ENCODE measurements at regions of chr5 and their contacts with region 1.

Region 1: DNA sequence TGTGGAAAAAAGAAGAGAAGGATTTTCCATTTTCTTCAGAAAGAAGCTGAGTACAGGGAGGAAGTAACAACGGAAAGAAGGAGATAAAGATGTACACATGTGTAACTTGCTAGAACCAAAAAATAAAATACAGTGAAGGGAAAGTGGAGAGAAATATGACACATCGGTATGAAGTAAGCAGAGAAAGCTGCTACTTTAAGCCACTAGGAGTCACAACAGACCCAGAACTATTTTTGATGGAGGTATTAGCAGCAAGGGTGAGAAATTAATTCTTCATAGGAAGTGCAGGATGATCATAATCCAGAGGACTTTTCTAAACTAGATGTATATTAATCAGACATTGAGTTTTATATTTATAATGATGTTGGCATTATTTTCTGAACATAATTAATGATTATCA is 88.5 kb downstream of the FAM174A start:
- DNase-seq: no peak
- ATAC-seq: peak; percentile 33
- H3K4me3 Mint-ChIP-seq: no peak overlapping the region
- H3K27ac Mint-ChIP-seq: no peak overlapping the region
- H3K4me1 Mint-ChIP-seq: no peaks in the 10 kb centered on the region
- H3K27me3 Mint-ChIP-seq: no peaks in the 10 kb centered on the region

Region 2: DNA sequence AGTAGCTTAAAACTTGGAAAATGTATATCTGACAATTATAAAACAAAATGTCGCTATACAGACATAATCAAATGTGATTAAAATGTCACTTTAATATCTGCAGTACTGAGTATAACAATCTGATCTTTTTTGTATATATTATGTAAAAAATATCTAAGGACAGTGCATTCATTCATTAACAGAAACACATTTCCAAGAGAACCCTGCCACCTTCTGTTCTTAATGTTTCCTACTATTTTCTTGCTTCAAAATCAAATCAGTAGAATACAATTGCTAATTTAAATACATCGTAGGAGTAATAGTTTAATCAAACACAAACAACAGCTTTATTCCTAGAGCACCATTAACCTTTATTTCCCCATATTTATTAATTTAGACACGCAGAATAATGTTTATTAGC is 422.0 kb after region 1 on chr5:
- CTCF ChIA-PET with region 1: interaction called, 4 read pairs
- POLR2A ChIA-PET with region 1: no interaction called
- intact Hi-C with region 1: loop called (anchors 1 kb)
- DNase-seq: no peak
- ATAC-seq: no peak
- H3K4me3 Mint-ChIP-seq: no peak overlapping the region
- H3K27ac Mint-ChIP-seq: no peak overlapping the region
- H3K4me1 Mint-ChIP-seq: peaks cover 9% of the 10 kb centered on the region
- H3K27me3 Mint-ChIP-seq: no peaks in the 10 kb centered on the region

Region 3: DNA sequence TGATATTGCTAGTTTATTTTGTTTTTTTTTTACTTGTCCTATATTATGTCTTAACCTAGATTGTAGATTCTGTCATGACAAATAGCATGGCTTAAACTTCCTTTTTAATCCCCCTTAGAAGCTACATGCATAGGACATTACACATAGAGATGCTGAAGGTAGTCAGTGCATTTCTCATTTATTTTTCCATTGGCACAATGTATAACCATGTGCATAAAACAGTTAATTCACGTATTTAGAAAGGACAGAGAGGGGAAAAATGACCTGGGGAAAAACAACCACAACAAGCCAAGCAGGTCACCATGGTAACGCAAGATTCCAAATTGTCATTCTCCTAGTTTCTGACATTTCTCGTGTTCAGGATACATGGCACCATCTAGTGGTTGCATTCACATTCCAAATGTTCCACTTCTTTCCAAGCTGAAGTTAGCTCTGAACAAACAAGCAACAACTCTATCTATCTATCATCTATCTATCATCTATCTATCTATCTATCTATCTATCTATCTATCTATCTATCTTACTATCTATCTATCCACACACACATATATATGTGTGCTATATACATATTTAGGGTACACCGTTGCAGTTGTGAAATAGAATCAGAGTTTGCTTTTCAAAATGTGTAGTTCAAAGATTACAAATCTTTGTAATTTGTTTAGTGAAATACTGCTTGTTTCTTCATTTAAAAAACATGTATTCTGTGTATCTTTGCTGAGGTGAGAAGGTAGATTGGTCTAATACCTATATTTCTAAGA is 766.6 kb after region 1 on chr5:
- CTCF ChIA-PET with region 1: no interaction called
- POLR2A ChIA-PET with region 1: no interaction called
- intact Hi-C with region 1: loop called (anchors 1 to 2 kb)
- DNase-seq: peak; percentile 8
- ATAC-seq: no peak
- H3K4me3 Mint-ChIP-seq: no peak overlapping the region
- H3K27ac Mint-ChIP-seq: no peak overlapping the region
- H3K4me1 Mint-ChIP-seq: no peaks in the 10 kb centered on the region
- H3K27me3 Mint-ChIP-seq: peaks cover 4% of the 10 kb centered on the region

Region 4: DNA sequence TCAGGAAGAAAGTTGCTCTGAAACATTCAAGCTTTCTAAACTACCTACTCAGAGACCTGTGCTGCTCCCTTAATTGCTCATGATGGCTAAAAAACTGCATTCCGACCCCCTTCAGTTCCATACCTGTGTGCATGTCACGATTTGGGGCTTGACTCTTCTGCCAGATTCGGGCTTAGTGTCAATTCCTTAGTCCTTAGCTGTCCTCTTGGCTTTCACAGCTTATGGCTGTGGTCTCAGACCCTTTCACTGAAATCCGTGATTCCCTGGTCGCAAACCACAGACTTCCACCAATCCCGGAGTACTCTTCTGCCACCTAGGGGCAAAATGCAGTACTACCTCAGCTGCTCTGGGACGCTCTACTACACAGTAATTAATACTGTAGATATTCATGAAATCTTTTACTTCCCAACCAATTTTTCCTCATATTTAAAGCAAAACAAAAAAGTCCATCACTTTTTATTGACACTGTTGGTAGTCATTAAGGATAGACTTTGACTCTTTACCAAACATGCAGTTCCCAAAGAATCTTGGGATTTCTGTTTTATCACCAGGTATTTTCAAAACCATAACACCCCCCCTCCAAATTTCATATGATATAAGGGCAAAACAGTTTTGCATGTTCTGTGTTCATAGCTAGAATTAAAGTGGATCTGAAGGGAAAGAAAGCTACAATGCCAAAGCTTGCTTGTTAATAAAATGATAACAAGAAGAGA is 1054.9 kb after region 1 on chr5:
- CTCF ChIA-PET with region 1: no interaction called
- POLR2A ChIA-PET with region 1: no interaction called
- intact Hi-C with region 1: loop called in 1 of 2 experiments (anchors 2 kb)
- DNase-seq: peak; percentile 58
- ATAC-seq: no peak
- H3K4me3 Mint-ChIP-seq: no peak overlapping the region
- H3K27ac Mint-ChIP-seq: no peak overlapping the region
- H3K4me1 Mint-ChIP-seq: peaks cover 2% of the 10 kb centered on the region
- H3K27me3 Mint-ChIP-seq: peaks cover 4% of the 10 kb centered on the region